Naive thymus-derived CD4-positive, alpha-beta T cell (primary cell): ENCODE measurements at regions of chr4 and their contacts with region 1.

Region 1: DNA sequence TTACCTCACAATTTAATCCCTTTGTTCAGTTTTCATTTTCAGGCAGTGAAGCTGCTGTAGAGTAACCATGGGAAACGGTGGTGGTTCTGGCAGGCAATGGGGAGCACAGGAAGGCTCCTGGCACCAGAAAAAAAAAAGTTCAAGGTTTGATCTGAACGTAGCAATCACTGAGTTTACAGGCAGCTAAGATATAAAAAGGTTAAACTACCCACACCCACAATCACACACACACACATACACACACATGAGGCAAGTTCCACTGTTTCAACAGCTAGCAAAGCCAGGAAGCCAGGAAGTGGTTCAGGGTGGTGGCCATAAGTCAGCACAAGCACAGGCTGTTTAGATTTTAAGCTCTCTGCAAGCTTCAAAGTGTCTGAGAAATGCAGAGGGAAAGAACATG is at the start of gene SULT1B1:
- DNase-seq: peak in 8 of 9 donors; percentile 40 to 92 (median 86)
- ATAC-seq: peak; percentile 98
- H3K4me3 ChIP-seq: peak within 1 kb of the TSS; percentile 62
- H3K4me3 Mint-ChIP-seq: peak within 1 kb of the TSS; percentile 85 to 99 (median 92)
- H3K27ac ChIP-seq: peak within 1 kb of the TSS; percentile 59
- H3K27ac Mint-ChIP-seq: peak within 1 kb of the TSS; percentile 90 to 97 (median 95)
- H3K4me1 ChIP-seq: peaks cover 0 to 37% of the 10 kb centered on the region in 2 donors
- H3K4me1 Mint-ChIP-seq: peaks cover 40 to 79% (median 72%) of the 10 kb centered on the region in 7 donors
- H3K27me3 ChIP-seq: no peaks in the 10 kb centered on the region
- H3K27me3 Mint-ChIP-seq: no peaks in the 10 kb centered on the region
- total RNA-seq, gene SULT1B1: 8.2 to 32.0 (median 17.2) TPM

Region 2: GRCh38 chr4:69531251-69531650 is 229.2 kb before region 1 on chr4:
- CTCF ChIA-PET with region 1: no interaction called
- POLR2A ChIA-PET with region 1: no interaction called
- intact Hi-C with region 1: no loop called
- DNase-seq: no peak
- ATAC-seq: no peak
- H3K4me3 ChIP-seq: no peak overlapping the region
- H3K4me3 Mint-ChIP-seq: no peak overlapping the region
- H3K27ac ChIP-seq: no peak overlapping the region
- H3K27ac Mint-ChIP-seq: no peak overlapping the region
- H3K4me1 ChIP-seq: no peaks in the 10 kb centered on the region
- H3K4me1 Mint-ChIP-seq: no peaks in the 10 kb centered on the region
- H3K27me3 ChIP-seq: no peaks in the 10 kb centered on the region
- H3K27me3 Mint-ChIP-seq: peaks cover 0 to 5% (median 0%) of the 10 kb centered on the region in 5 donors

Region 3: DNA sequence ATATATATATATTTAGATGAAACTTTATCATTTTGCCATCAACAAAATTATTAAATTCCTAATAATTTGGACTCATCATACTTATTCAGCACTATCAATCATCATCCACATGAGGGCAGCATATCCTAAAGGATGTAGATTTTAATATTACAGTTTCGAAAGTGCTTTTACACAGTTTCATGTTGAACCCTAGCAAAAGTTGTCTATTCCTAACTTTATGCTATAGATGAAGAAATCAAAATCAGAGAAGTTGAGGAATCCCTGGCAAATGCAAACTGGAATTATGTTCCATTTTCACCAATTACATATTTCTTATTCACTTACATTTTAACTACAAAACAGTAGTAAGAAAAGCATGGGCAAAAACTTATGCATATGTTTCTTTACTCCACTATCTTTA is 70.9 kb before region 1 on chr4:
- CTCF ChIA-PET with region 1: interaction called, 15 read pairs
- POLR2A ChIA-PET with region 1: no interaction called
- intact Hi-C with region 1: loop called in 1 of 2 experiments (anchors 1 kb)
- DNase-seq: peak in 6 of 9 donors; percentile 20 to 63 (median 48)
- ATAC-seq: peak; percentile 76
- H3K4me3 ChIP-seq: no peak overlapping the region
- H3K4me3 Mint-ChIP-seq: peak overlapping the region in 7 of 10 donors; percentile 39 to 76 (median 55)
- H3K27ac ChIP-seq: no peak overlapping the region
- H3K27ac Mint-ChIP-seq: peak overlapping the region in 3 of 9 donors; percentile 30 to 53 (median 38)
- H3K4me1 ChIP-seq: no peaks in the 10 kb centered on the region
- H3K4me1 Mint-ChIP-seq: peaks cover 0 to 19% (median 5%) of the 10 kb centered on the region in 7 donors
- H3K27me3 ChIP-seq: no peaks in the 10 kb centered on the region
- H3K27me3 Mint-ChIP-seq: no peaks in the 10 kb centered on the region

Region 4: GRCh38 chr4:69743476-69744156 is 16.8 kb before region 1 on chr4:
- CTCF ChIA-PET with region 1: interaction called, 3 read pairs
- POLR2A ChIA-PET with region 1: interaction called, 5 read pairs
- intact Hi-C with region 1: loop called in 1 of 2 experiments (anchors 2 kb)
- DNase-seq: no peak
- ATAC-seq: no peak
- H3K4me3 ChIP-seq: no peak overlapping the region
- H3K4me3 Mint-ChIP-seq: no peak overlapping the region
- H3K27ac ChIP-seq: no peak overlapping the region
- H3K27ac Mint-ChIP-seq: no peak overlapping the region
- H3K4me1 ChIP-seq: no peaks in the 10 kb centered on the region
- H3K4me1 Mint-ChIP-seq: peaks cover 5 to 39% (median 7%) of the 10 kb centered on the region in 7 donors
- H3K27me3 ChIP-seq: no peaks in the 10 kb centered on the region
- H3K27me3 Mint-ChIP-seq: no peaks in the 10 kb centered on the region

Region 5: DNA sequence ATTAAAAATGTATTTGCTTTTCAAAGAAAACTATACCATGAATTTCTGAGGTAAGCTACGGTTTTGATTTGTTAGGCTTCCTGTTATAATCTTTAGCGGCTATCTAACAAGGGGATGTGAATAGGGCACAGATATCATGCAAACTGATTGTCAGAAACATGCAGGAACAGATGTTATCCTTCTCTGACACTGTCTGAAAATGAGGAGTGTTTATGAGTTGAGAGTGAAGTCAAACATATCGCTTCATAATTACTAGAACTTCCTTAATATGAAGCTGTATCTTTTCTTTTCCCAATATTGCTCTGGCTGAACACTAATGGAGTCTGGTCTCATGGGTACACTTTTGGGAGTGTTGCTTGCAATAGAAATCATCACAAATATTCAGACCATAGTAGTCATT is 16.2 kb after region 1 on chr4:
- CTCF ChIA-PET with region 1: interaction called, 3 read pairs
- POLR2A ChIA-PET with region 1: interaction called, 4 read pairs
- intact Hi-C with region 1: loop called in 1 of 2 experiments (anchors 1 kb)
- DNase-seq: no peak
- ATAC-seq: no peak
- H3K4me3 ChIP-seq: no peak overlapping the region
- H3K4me3 Mint-ChIP-seq: no peak overlapping the region
- H3K27ac ChIP-seq: no peak overlapping the region
- H3K27ac Mint-ChIP-seq: no peak overlapping the region
- H3K4me1 ChIP-seq: no peaks in the 10 kb centered on the region
- H3K4me1 Mint-ChIP-seq: peaks cover 0 to 8% (median 4%) of the 10 kb centered on the region in 7 donors
- H3K27me3 ChIP-seq: no peaks in the 10 kb centered on the region
- H3K27me3 Mint-ChIP-seq: peaks cover 0 to 4% (median 0%) of the 10 kb centered on the region in 5 donors

Region 6: GRCh38 chr4:69881173-69881773 is 120.8 kb after region 1 on chr4:
- CTCF ChIA-PET with region 1: interaction called, 5 read pairs
- POLR2A ChIA-PET with region 1: interaction called, 5 read pairs
- intact Hi-C with region 1: loop called in 1 of 2 experiments (anchors 5 kb)
- DNase-seq: peak in 7 of 9 donors; percentile 25 to 62 (median 48)
- ATAC-seq: peak; percentile 90
- H3K4me3 ChIP-seq: no peak overlapping the region
- H3K4me3 Mint-ChIP-seq: no peak overlapping the region
- H3K27ac ChIP-seq: no peak overlapping the region
- H3K27ac Mint-ChIP-seq: no peak overlapping the region
- H3K4me1 ChIP-seq: no peaks in the 10 kb centered on the region
- H3K4me1 Mint-ChIP-seq: no peaks in the 10 kb centered on the region
- H3K27me3 ChIP-seq: no peaks in the 10 kb centered on the region
- H3K27me3 Mint-ChIP-seq: peaks cover 0 to 8% (median 6%) of the 10 kb centered on the region in 5 donors

Region 7: DNA sequence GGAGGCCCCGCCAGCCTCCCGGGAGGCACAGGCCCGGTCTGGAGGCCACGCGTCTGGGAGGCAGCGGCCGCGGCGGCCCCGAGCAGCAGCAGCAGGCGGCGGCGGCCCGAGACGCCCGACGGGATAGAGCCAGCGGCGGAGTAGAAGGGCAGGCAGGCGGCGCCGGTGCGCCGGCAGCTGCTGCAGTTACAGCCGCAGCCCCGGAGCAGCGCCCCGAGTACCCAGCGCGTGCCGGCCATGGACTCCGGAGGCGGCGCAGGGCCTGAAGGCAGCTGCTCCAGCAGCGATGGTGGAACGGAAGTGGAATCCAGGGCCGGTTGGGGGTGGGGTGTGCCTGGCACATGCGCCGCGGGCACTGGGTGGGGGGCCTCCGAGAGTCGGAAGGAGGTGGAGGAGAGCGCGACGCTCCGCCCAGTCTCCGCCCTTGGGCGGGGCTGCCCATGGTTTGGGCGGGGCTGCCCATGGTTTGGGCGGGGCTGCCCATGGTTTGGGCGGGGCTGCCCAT is 1079.2 kb after region 1 on chr4 and contains the start of gene GRSF1:
- CTCF ChIA-PET with region 1: no interaction called
- POLR2A ChIA-PET with region 1: interaction called, 3 read pairs
- intact Hi-C with region 1: loop called in 1 of 2 experiments (anchors 1 kb)
- DNase-seq: peak; percentile 92 to 96 (median 95)
- ATAC-seq: peak; percentile 96
- H3K4me3 ChIP-seq: peak within 1 kb of the TSS; percentile 83
- H3K4me3 Mint-ChIP-seq: peak within 1 kb of the TSS; percentile 89 to 99 (median 97)
- H3K27ac ChIP-seq: peak within 1 kb of the TSS; percentile 88
- H3K27ac Mint-ChIP-seq: peak within 1 kb of the TSS; percentile 91 to 98 (median 96)
- H3K4me1 ChIP-seq: peaks cover 17 to 22% of the 10 kb centered on the region in 2 donors
- H3K4me1 Mint-ChIP-seq: peaks cover 8 to 40% (median 29%) of the 10 kb centered on the region in 7 donors
- H3K27me3 ChIP-seq: no peaks in the 10 kb centered on the region
- H3K27me3 Mint-ChIP-seq: no peaks in the 10 kb centered on the region
- total RNA-seq, gene GRSF1: 35.9 to 76.0 (median 48.0) TPM